CD4-positive, alpha-beta memory T cell (primary cell): ENCODE measurements at regions of chr9 and their contacts with region 1.

Region 1: GRCh38 chr9:81686614-81687520 is 2.5 kb downstream of the TLE1 start:
- DNase-seq: peak in 1 of 5 donors; percentile 19
- H3K4me3 ChIP-seq: no peak overlapping the region
- H3K4me3 Mint-ChIP-seq: peak overlapping the region in 7 of 8 donors; percentile 69 to 86 (median 74)
- H3K27ac ChIP-seq: no peak overlapping the region
- H3K27ac Mint-ChIP-seq: peak overlapping the region in 2 of 7 donors; percentile 30 to 69
- H3K4me1 ChIP-seq: peaks cover 10% of the 10 kb centered on the region
- H3K4me1 Mint-ChIP-seq: peaks cover 8 to 25% (median 18%) of the 10 kb centered on the region in 4 donors
- H3K27me3 ChIP-seq: no peaks in the 10 kb centered on the region
- H3K27me3 Mint-ChIP-seq: peaks cover 11 to 16% of the 10 kb centered on the region in 2 donors

Region 2: DNA sequence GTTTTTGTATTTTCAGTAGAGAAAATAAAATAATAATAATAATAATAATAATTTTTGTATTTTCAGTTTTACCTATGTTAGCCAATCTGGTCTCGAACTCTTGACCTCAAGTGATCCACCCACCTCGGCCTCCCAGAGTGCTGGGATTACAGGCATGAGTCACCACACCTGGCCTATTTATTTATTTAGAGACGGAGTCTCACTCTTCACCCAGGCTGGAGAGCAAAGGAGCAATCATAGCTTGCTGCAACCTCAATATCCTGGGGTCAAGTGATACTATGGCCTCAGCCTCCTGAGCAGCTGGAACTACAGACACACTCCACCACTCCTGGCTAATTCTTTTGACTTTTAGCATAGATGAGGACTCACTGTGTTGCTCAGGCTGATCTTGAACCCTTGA is 165.0 kb before region 1 on chr9:
- CTCF ChIA-PET with region 1: no interaction called
- POLR2A ChIA-PET with region 1: no interaction called
- intact Hi-C with region 1: loop called (anchors 2 kb)
- DNase-seq: no peak
- H3K4me3 ChIP-seq: no peak overlapping the region
- H3K4me3 Mint-ChIP-seq: no peak overlapping the region
- H3K27ac ChIP-seq: no peak overlapping the region
- H3K27ac Mint-ChIP-seq: no peak overlapping the region
- H3K4me1 ChIP-seq: no peaks in the 10 kb centered on the region
- H3K4me1 Mint-ChIP-seq: no peaks in the 10 kb centered on the region
- H3K27me3 ChIP-seq: no peaks in the 10 kb centered on the region
- H3K27me3 Mint-ChIP-seq: no peaks in the 10 kb centered on the region

Region 3: DNA sequence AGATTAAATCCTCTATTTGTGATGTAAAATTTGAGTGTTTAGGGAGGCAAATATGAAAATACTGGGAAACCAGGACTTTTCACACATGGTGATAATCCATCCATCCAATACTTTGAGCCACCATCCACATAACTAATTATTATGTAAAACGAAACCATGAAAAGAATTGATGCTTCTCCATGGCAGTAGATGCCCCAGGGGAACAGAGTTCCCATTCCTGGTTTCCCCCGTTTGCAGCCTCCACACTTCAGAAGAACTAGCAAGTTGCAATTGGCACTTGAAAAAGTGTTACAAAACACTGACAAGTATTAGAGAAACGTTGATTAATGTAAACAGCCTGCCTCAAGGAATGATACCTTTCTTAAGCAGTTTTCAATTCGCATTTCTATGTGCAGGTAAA is 12.2 kb after region 1 on chr9:
- CTCF ChIA-PET with region 1: no interaction called
- POLR2A ChIA-PET with region 1: no interaction called
- intact Hi-C with region 1: no loop called
- DNase-seq: no peak
- H3K4me3 ChIP-seq: no peak overlapping the region
- H3K4me3 Mint-ChIP-seq: no peak overlapping the region
- H3K27ac ChIP-seq: no peak overlapping the region
- H3K27ac Mint-ChIP-seq: no peak overlapping the region
- H3K4me1 ChIP-seq: no peaks in the 10 kb centered on the region
- H3K4me1 Mint-ChIP-seq: no peaks in the 10 kb centered on the region
- H3K27me3 ChIP-seq: no peaks in the 10 kb centered on the region
- H3K27me3 Mint-ChIP-seq: no peaks in the 10 kb centered on the region

Region 4: GRCh38 chr9:81771571-81771970 is 84.7 kb after region 1 on chr9:
- CTCF ChIA-PET with region 1: no interaction called
- POLR2A ChIA-PET with region 1: no interaction called
- intact Hi-C with region 1: no loop called
- DNase-seq: no peak
- H3K4me3 ChIP-seq: no peak overlapping the region
- H3K4me3 Mint-ChIP-seq: no peak overlapping the region
- H3K27ac ChIP-seq: no peak overlapping the region
- H3K27ac Mint-ChIP-seq: no peak overlapping the region
- H3K4me1 ChIP-seq: no peaks in the 10 kb centered on the region
- H3K4me1 Mint-ChIP-seq: no peaks in the 10 kb centered on the region
- H3K27me3 ChIP-seq: no peaks in the 10 kb centered on the region
- H3K27me3 Mint-ChIP-seq: no peaks in the 10 kb centered on the region